ENCODE measurements at regions of chr17 and their contacts with region 1.

Region 1: DNA sequence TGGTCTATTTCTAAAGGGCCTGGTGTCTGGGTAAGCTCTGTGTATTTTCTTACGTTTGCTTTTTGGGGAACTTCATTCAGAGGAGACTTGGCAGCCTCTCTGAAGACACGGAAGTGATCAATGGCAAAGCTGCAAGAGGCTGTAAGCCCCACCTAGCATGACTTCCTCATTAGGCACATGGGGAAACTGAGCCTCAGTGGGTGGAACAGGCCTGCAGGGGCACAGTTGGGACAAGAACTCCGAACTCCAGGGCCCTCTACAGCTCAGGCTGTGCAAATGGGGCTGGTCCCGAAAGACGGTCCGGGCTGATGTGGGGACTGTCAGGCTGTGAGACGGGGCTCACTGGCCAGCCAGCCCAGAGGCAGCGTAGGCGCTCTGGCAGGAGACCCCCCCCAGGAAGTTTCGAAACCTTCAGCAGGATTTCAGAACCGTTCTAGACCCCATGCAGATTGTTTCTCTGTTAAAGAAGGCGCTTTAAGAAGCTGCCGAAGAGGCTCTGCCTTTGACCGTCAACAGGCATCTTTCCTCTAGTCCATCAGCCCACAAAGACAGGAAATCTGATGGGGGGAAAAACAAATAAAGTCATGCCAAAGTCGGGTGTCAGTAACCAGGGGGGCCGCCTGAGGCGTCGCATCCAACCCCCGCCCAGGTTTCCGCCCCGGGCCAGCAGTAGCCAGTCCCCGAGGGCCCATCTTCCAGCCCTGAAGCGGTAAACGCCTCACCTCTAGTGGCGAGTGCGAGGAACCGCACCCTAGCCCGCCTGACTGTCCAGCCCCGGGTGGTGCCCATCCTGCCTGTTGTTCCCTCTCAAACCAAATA is 79.8 kb upstream of the TBC1D3K start:
- DNase-seq: peak; percentile 88
- ATAC-seq: peak; percentile 99
- H3K4me3 Mint-ChIP-seq: peak overlapping the region; percentile 62
- H3K27ac Mint-ChIP-seq: no peak overlapping the region
- H3K4me1 Mint-ChIP-seq: no peaks in the 10 kb centered on the region
- H3K27me3 Mint-ChIP-seq: peaks cover 2% of the 10 kb centered on the region; the same call in 1 of the 2 replicates
- CTCF ChIP-seq: peak; percentile 87

Region 2: DNA sequence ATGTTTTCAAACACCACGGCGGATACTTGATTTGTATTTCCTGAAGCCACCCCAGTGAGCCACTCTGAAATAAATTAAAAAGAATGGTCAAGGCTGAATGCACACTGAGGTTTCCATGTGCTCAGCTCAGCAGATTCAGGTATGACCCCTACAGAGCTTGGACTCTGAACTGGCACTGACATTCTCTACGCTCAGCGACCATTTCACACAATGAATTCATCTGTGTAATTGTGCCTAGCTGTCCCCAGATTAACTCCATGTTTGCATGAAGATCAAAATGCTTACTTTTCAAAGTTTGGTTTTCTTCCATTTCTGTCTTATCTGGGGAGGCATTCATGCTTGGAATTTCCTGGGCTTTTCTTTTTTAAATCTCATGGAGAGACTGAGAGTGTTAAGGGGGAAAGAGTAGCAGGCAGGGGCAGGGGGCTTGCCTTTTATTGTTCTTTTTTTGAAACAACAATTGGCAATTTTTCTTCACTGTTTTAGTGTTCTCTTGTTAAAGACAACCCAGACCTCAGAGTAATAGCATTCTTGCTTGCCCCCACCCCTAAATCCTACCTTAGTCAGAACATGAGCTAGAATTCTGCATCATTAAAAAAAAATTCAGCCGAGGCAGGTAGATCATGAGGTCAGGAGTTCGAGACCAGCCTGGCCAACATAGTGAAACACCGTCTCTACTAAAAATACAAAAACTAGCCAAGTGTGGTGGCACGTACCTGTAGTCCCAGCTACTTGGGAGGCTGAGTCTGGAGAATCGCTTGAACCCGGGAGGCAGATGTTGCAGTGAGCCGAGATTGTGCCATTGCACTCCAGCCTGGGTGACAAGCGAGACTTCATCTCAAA is 14.0 kb before region 1 on chr17:
- CTCF ChIA-PET with region 1: interaction called, 10 read pairs
- POLR2A ChIA-PET with region 1: no interaction called
- DNase-seq: no peak
- ATAC-seq: no peak
- H3K4me3 Mint-ChIP-seq: no peak overlapping the region
- H3K27ac Mint-ChIP-seq: no peak overlapping the region
- H3K4me1 Mint-ChIP-seq: peaks cover 27% of the 10 kb centered on the region
- H3K27me3 Mint-ChIP-seq: no peaks in the 10 kb centered on the region
- CTCF ChIP-seq: no peak

Measured in WTC11 (cell line).